Activated B cell treated with CpG ODN at 0.5 μM for 24 hours (primary cell): ENCODE measurements at regions of chr11 and their contacts with region 1.

Region 1: DNA sequence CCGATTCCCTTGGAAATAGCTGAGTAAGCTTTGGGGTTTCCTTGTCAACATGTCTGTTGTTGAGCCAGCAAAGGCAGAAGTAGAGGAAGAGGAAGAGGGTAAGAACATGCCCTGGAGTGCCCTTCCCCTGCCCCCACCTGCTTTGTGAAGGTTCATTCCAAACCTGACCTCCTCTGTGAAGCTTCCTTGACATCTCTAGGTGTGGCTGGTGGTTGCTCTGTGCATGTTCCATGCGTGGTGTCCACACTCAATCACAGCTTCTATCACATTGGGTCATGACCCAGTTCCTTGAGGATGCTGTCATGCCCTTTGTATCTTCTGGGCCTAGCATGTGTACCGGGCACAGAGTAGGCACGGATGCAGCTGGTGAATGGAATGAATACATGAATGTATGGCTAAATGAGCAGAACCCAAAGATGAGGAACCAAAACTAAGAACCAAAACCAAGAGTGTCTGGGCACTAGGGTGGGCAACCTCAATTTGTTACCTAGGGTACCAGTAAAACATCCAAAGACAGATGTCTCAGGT is 23.7 kb upstream of the FXYD6 start:
- DNase-seq: peak; percentile 40
- ATAC-seq: peak; percentile 83
- H3K4me3 Mint-ChIP-seq: peak overlapping the region; percentile 9
- H3K27ac Mint-ChIP-seq: peak overlapping the region; percentile 87
- H3K4me1 Mint-ChIP-seq: peaks cover 26% of the 10 kb centered on the region
- H3K27me3 Mint-ChIP-seq: no peaks in the 10 kb centered on the region
- CTCF ChIP-seq: no peak

Region 2: DNA sequence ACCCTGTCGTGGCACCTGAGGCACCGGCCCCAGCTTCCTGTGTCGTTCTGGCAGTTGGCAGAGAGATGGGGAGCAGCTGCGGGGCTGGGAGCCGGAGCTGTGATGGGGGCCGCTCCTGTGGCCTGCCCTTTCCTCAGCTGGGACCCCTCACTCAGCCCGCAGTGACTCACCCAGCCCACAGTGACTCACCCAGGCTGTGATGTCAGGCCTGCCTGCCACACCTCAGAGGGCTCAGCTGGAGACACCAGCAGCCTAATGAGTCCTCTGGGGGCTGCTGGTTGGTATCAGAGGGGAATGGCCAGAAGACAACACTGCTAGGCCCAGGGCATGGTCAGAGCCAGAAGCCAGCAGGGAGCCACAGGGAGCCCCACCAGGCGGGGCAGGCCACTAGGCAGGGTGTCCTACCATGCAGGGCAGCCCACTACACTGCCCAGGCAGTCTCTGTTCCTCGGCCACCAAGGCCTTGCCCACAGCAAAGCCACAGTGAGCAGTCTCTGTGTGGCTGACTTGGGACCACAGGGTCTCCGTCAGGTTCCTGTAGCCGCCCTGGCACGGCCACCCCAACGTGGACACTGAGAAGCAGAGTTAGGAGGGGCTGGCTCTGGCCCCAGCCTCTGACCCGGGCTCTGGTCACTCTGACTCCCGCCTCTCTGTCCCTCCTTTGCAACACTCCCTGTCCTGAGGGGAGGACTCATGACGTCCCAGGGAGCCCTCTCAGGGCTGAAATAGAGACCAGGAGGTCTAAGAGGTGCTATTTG is 71.4 kb before region 1 on chr11:
- CTCF ChIA-PET with region 1: no interaction called
- POLR2A ChIA-PET with region 1: interaction called, 3 read pairs
- intact Hi-C with region 1: loop called (anchors 1 kb)
- DNase-seq: peak; percentile 79
- ATAC-seq: peak; percentile 89
- H3K4me3 Mint-ChIP-seq: peak overlapping the region; percentile 44
- H3K27ac Mint-ChIP-seq: peak overlapping the region; percentile 80
- H3K4me1 Mint-ChIP-seq: peaks cover 51% of the 10 kb centered on the region
- H3K27me3 Mint-ChIP-seq: peaks cover 23% of the 10 kb centered on the region
- CTCF ChIP-seq: no peak

Region 3: DNA sequence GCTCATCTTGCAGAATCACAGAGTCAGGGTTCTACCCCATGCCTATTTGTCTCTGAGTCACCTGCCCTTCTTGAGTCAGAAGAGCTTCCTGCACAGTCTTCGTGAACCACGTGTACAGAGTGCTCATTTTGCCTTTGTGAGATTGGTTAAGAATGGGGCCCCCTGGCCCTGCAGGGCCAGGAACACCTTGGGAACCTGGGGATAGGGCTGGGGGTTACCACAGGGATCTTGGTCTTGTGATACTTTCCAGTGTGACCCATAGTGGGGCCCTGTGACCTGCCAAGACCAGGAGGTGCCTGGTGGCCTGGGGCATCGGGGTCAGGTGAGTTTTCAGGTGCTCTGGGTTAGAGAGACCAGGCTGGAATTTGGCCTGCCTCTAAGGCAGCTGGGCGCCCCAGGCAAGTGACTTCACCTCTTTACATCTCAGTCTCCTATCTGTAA is 19.6 kb after region 1 on chr11:
- CTCF ChIA-PET with region 1: no interaction called
- POLR2A ChIA-PET with region 1: interaction called, 7 read pairs
- intact Hi-C with region 1: loop called (anchors 2 kb)
- DNase-seq: no peak
- ATAC-seq: peak; percentile 86
- H3K4me3 Mint-ChIP-seq: peak overlapping the region; percentile 24
- H3K27ac Mint-ChIP-seq: peak overlapping the region; percentile 84
- H3K4me1 Mint-ChIP-seq: peaks cover 16% of the 10 kb centered on the region
- H3K27me3 Mint-ChIP-seq: no peaks in the 10 kb centered on the region
- CTCF ChIP-seq: no peak

Region 4: GRCh38 chr11:117930668-117931330 is 30.6 kb after region 1 on chr11:
- CTCF ChIA-PET with region 1: no interaction called
- POLR2A ChIA-PET with region 1: no interaction called
- intact Hi-C with region 1: no loop called
- DNase-seq: no peak
- ATAC-seq: peak; percentile 60
- H3K4me3 Mint-ChIP-seq: no peak overlapping the region
- H3K27ac Mint-ChIP-seq: peak overlapping the region; percentile 41
- H3K4me1 Mint-ChIP-seq: peaks cover 14% of the 10 kb centered on the region
- H3K27me3 Mint-ChIP-seq: peaks cover 2% of the 10 kb centered on the region
- CTCF ChIP-seq: no peak